Activated T-helper 1 cell treated with anti-CD3 and anti-CD28 coated beads, Interleukin-12 subunit alpha, Interleukin-12 subunit beta, Interleukin-2, Interleukin-4 antibody, amounts not matched to agents 30 ng/mL and 10 ng/mL and 1 ng/mL, durations not matched to agents 14 hours and 24 hours and 36 hours (primary cell): ENCODE measurements at regions of chr1 and their contacts with region 1.

Region 1: GRCh38 chr1:66929999-66930822 is 5.4 kb downstream of the MIER1 start:
- DNase-seq: peak; percentile 93
- H3K4me3 Mint-ChIP-seq: peak overlapping the region; percentile 89
- H3K27ac Mint-ChIP-seq: peak overlapping the region; percentile 93
- H3K4me1 Mint-ChIP-seq: peaks cover 72% of the 10 kb centered on the region
- H3K27me3 Mint-ChIP-seq: no peaks in the 10 kb centered on the region

Region 2: GRCh38 chr1:66788231-66788939 is 141.8 kb before region 1 on chr1:
- intact Hi-C with region 1: loop called (anchors 2 kb)
- DNase-seq: peak; percentile 25
- H3K4me3 Mint-ChIP-seq: peak overlapping the region; percentile 63
- H3K27ac Mint-ChIP-seq: peak overlapping the region; percentile 57
- H3K4me1 Mint-ChIP-seq: peaks cover 24% of the 10 kb centered on the region
- H3K27me3 Mint-ChIP-seq: no peaks in the 10 kb centered on the region

Region 3: DNA sequence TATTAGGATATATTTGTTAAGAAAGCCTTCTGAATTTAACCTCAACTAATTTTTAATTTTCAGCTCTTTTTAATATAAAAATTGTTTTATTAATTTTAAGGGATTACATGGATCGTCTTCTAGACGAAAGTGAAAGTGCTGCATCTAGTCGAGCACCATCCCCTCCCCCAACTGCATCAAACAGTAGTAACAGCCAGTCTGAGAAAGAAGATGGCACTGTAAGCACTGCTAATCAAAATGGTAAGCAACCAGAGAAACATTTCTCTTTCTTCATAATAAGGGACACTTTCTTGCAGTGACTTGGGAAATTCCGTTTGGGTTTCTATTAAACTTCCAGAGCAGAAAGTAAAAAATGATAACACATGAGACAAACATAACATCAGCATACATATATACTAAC is 51.5 kb after region 1 on chr1:
- intact Hi-C with region 1: loop called (anchors 2 kb)
- DNase-seq: peak; percentile 40
- H3K4me3 Mint-ChIP-seq: peak overlapping the region; percentile 69
- H3K27ac Mint-ChIP-seq: peak overlapping the region; percentile 75
- H3K4me1 Mint-ChIP-seq: peaks cover 35% of the 10 kb centered on the region
- H3K27me3 Mint-ChIP-seq: no peaks in the 10 kb centered on the region

Region 4: DNA sequence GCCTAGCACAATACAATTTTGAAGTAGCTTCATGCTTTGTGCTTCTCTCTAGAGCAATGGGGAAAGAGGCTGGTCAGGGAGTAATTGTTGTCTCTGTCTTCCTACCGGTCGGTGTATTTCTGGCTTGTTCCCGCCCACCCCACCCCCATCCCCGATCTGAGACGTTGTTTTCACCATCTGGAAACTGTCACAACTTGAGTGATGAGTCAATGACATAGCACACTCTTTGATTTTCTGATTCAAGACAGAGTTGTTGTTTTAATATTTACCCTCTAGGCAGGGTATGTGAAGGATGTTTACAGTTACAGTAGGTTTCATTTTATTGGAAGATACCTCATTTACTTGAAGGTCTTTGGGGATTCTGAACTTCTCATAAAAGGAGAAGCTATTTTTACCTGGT is 384.5 kb after region 1 on chr1:
- intact Hi-C with region 1: loop called (anchors 5 kb)
- DNase-seq: no peak
- H3K4me3 Mint-ChIP-seq: peak overlapping the region; percentile 100
- H3K27ac Mint-ChIP-seq: peak overlapping the region; percentile 97
- H3K4me1 Mint-ChIP-seq: peaks cover 6% of the 10 kb centered on the region
- H3K27me3 Mint-ChIP-seq: no peaks in the 10 kb centered on the region